Activated CD4-positive, alpha-beta memory T cell treated with anti-CD3 and anti-CD28 coated beads, Interleukin-2, amount 10 ng/mL, durations not matched to agents 7 days and 5 days (primary cell): ENCODE measurements at regions of chr14 and their contacts with region 1.

Region 1: DNA sequence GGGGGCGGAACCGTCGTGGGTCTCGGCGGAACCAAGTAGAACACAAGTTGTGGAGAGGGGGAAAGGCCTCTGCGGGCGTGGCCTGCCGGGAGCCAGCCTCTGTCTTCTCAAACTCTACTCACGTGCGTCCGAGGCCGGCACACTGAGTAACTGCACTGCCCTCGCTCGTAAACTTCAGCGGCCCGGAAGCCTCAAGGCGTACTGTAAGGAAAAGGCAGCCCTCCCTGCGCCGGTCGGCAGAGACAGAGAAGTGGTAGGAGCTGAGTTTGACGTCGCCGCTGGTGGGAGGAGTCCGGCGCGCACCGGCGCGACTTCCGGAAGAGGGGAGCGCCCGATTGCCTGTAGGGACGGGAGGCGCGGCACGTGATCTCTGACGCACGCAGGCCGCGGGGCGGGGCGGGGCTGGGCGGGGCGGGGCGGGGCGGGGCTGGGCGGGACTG is at the start of gene FBXO33:
- DNase-seq: peak; percentile 97
- H3K4me3 Mint-ChIP-seq: peak within 1 kb of the TSS; percentile 94
- H3K27ac Mint-ChIP-seq: peak within 1 kb of the TSS; percentile 99
- H3K4me1 Mint-ChIP-seq: peaks cover 38% of the 10 kb centered on the region
- H3K27me3 Mint-ChIP-seq: no peaks in the 10 kb centered on the region
- total RNA-seq, gene FBXO33: 23.1 to 24.8 TPM

Region 2: DNA sequence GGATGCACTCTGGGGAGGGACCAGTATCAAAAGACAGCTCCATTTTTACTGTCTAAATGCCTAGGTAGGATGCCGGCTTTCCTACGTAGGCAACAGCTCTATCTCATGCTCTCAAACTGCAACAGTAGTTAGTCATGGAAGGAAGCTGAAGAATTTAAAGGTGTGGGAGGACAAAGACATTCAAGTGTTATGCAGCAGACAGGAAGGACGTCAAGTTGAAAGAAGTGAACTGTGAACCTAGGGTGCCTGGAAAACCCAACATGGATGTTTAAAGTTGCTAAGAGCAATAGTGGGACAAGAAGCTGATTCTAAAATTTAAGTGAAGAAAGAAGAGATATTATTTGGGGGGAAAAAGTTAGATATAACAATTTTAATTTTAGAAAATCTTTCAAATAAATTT is 335.0 kb before region 1 on chr14:
- CTCF ChIA-PET with region 1: interaction called, 3 read pairs
- POLR2A ChIA-PET with region 1: interaction called, 49 read pairs
- DNase-seq: no peak
- H3K4me3 Mint-ChIP-seq: no peak overlapping the region
- H3K27ac Mint-ChIP-seq: no peak overlapping the region
- H3K4me1 Mint-ChIP-seq: peaks cover 41% of the 10 kb centered on the region
- H3K27me3 Mint-ChIP-seq: no peaks in the 10 kb centered on the region

Region 3: GRCh38 chr14:39114073-39114838 is 317.9 kb before region 1 on chr14 and contains the start of gene GEMIN2:
- CTCF ChIA-PET with region 1: interaction called, 8 read pairs
- POLR2A ChIA-PET with region 1: interaction called, 29 read pairs
- DNase-seq: peak; percentile 96
- H3K4me3 Mint-ChIP-seq: peak within 1 kb of the TSS; percentile 91
- H3K27ac Mint-ChIP-seq: peak within 1 kb of the TSS; percentile 93
- H3K4me1 Mint-ChIP-seq: peaks cover 38% of the 10 kb centered on the region
- H3K27me3 Mint-ChIP-seq: no peaks in the 10 kb centered on the region
- total RNA-seq, gene GEMIN2: 18.3 to 22.4 TPM

Region 4: GRCh38 chr14:39174560-39175444 is 257.4 kb before region 1 on chr14 and contains the start of gene PNN:
- CTCF ChIA-PET with region 1: interaction called, 8 read pairs
- POLR2A ChIA-PET with region 1: interaction called, 74 read pairs
- DNase-seq: peak; percentile 98
- H3K4me3 Mint-ChIP-seq: peak within 1 kb of the TSS; percentile 96
- H3K27ac Mint-ChIP-seq: peak within 1 kb of the TSS; percentile 94
- H3K4me1 Mint-ChIP-seq: peaks cover 57% of the 10 kb centered on the region
- H3K27me3 Mint-ChIP-seq: no peaks in the 10 kb centered on the region
- total RNA-seq, gene PNN: 75.0 to 75.3 TPM

Region 5: GRCh38 chr14:39266871-39267591 is 165.2 kb before region 1 on chr14:
- CTCF ChIA-PET with region 1: interaction called, 5 read pairs
- POLR2A ChIA-PET with region 1: interaction called, 76 read pairs
- DNase-seq: peak; percentile 84
- H3K4me3 Mint-ChIP-seq: peak overlapping the region; percentile 73
- H3K27ac Mint-ChIP-seq: peak overlapping the region; percentile 94
- H3K4me1 Mint-ChIP-seq: peaks cover 50% of the 10 kb centered on the region
- H3K27me3 Mint-ChIP-seq: no peaks in the 10 kb centered on the region

Region 6: DNA sequence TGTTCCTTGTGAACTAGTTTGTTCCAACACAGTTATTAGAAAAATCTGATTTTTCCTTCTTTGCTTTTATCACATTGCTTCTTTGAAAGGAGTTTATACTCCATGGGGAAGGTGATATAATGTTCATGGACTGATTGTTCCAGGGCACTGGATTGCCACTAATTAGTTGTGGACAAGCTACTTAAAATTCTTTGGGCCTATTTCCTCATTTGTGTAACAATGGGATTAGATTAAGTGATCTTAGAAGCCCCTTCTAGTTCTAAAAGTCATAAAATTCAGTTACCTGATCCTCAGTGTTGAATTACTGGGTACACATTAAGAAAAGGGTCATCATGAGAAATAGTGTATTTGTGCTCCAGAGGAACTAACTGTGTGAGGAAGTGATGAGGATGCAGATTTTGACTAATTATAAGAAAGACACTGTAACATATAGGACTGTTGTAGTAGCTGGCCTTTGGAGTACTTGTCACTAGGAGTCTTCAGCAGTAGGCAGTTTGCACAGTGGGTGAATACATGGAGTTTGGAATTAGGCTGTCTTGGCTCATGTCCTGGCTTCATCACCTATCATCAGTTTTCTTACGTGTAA is 116.2 kb before region 1 on chr14:
- CTCF ChIA-PET with region 1: no interaction called
- POLR2A ChIA-PET with region 1: no interaction called
- DNase-seq: no peak
- H3K4me3 Mint-ChIP-seq: no peak overlapping the region
- H3K27ac Mint-ChIP-seq: no peak overlapping the region
- H3K4me1 Mint-ChIP-seq: no peaks in the 10 kb centered on the region
- H3K27me3 Mint-ChIP-seq: no peaks in the 10 kb centered on the region

Region 7: DNA sequence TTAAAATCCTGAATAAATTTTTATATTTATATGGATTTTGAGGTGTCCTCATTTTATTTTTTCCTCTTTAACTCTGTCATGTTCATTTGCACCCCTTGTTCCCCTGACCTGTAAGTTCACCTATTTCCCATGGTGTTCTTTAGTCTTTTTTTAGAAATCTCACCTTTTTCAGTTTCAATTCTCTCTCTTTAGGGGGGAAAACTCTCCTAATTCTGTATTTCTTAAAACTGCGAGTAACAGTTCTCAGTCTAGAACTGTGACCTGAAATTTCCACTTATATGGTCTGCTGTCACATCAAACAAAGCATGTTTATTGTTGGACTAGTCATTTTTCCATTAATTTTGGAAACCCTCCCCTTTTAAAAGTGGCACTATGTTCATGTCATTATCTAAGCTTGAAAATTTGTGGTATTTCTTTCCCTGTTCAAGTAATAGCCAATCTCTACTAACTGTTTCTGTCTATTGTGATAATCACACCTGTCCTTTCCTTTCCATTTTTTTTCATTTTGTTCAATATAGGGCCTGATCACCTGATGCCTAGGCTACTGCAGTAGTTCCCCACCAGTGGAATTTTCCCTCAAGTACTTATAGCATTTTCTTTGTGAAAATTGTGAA is 14.0 kb after region 1 on chr14:
- CTCF ChIA-PET with region 1: interaction called, 7 read pairs
- POLR2A ChIA-PET with region 1: interaction called, 22 read pairs
- DNase-seq: no peak
- H3K4me3 Mint-ChIP-seq: no peak overlapping the region
- H3K27ac Mint-ChIP-seq: no peak overlapping the region
- H3K4me1 Mint-ChIP-seq: peaks cover 25% of the 10 kb centered on the region
- H3K27me3 Mint-ChIP-seq: no peaks in the 10 kb centered on the region